Activated CD4-positive, alpha-beta T cell treated with anti-CD3 and anti-CD28 coated beads for 36 hours (primary cell): ENCODE measurements at regions of chr13 and their contacts with region 1.

Region 1: DNA sequence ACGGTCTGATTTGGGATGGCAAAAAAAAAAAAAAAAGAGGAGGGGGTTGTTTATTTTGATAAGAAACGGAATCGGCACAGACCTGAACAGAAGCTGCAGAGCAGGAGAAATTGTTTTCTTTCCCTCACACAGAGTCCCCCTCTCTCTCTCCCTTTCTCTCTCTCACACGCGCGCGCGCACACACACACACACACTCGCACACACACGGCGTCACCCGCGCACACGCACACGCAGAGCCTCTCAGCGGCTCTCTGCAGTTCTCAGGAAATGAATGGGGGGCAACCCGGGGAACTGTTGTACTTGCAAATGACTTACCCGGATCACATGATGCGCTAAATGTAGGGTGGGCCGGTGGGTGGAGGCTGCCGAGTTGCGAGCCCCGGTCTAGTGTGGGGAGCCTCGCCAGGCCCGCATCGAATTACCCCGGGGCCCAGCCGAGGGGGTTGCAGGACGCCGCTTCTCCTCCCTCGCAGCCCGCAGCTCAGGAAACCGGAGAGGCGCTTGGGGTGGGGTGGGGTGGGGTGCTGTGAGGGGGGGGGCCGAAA is 475 bp downstream of the KLF12 start:
- DNase-seq: peak; percentile 91
- ATAC-seq: peak; percentile 53
- H3K4me3 Mint-ChIP-seq: no peak overlapping the region
- H3K27ac Mint-ChIP-seq: peak overlapping the region; percentile 99
- H3K4me1 Mint-ChIP-seq: peaks cover 35% of the 10 kb centered on the region
- H3K27me3 Mint-ChIP-seq: no peaks in the 10 kb centered on the region

Region 2: GRCh38 chr13:72781451-72782439 is 1352.0 kb before region 1 on chr13 and contains the starts of genes DIS3 and PIBF1:
- CTCF ChIA-PET with region 1: no interaction called
- POLR2A ChIA-PET with region 1: no interaction called
- intact Hi-C with region 1: loop called in 1 of 2 experiments (anchors 2 kb)
- DNase-seq: peak; percentile 98
- ATAC-seq: peak; percentile 98
- H3K4me3 Mint-ChIP-seq: peak within 1 kb of the TSS; percentile 94
- H3K27ac Mint-ChIP-seq: peak within 1 kb of the TSS; percentile 97
- H3K4me1 Mint-ChIP-seq: peaks cover 55% of the 10 kb centered on the region
- H3K27me3 Mint-ChIP-seq: no peaks in the 10 kb centered on the region
- total RNA-seq, gene DIS3: 55.0 to 63.5 TPM
- total RNA-seq, gene PIBF1: 25.7 to 25.9 TPM

Region 3: GRCh38 chr13:73835138-73835721 is 298.5 kb before region 1 on chr13:
- CTCF ChIA-PET with region 1: no interaction called
- POLR2A ChIA-PET with region 1: no interaction called
- intact Hi-C with region 1: loop called (anchors 2 to 5 kb)
- DNase-seq: no peak
- ATAC-seq: peak; percentile 57
- H3K4me3 Mint-ChIP-seq: no peak overlapping the region
- H3K27ac Mint-ChIP-seq: no peak overlapping the region
- H3K4me1 Mint-ChIP-seq: peaks cover 46% of the 10 kb centered on the region
- H3K27me3 Mint-ChIP-seq: no peaks in the 10 kb centered on the region

Region 4: GRCh38 chr13:73984949-73985691 is 148.6 kb before region 1 on chr13:
- CTCF ChIA-PET with region 1: no interaction called
- POLR2A ChIA-PET with region 1: interaction called, 5 read pairs
- intact Hi-C with region 1: loop called (anchors 1 kb)
- DNase-seq: peak; percentile 89
- ATAC-seq: peak; percentile 90
- H3K4me3 Mint-ChIP-seq: peak overlapping the region; percentile 58
- H3K27ac Mint-ChIP-seq: peak overlapping the region; percentile 98
- H3K4me1 Mint-ChIP-seq: peaks cover 36% of the 10 kb centered on the region
- H3K27me3 Mint-ChIP-seq: no peaks in the 10 kb centered on the region

Region 5: GRCh38 chr13:74090869-74091605 is 42.7 kb before region 1 on chr13:
- CTCF ChIA-PET with region 1: interaction called, 4 read pairs
- POLR2A ChIA-PET with region 1: interaction called, 3 read pairs
- intact Hi-C with region 1: loop called in 1 of 2 experiments (anchors 2 kb)
- DNase-seq: no peak
- ATAC-seq: peak; percentile 70
- H3K4me3 Mint-ChIP-seq: peak overlapping the region; percentile 24
- H3K27ac Mint-ChIP-seq: peak overlapping the region; percentile 87
- H3K4me1 Mint-ChIP-seq: peaks cover 65% of the 10 kb centered on the region
- H3K27me3 Mint-ChIP-seq: no peaks in the 10 kb centered on the region

Region 6: DNA sequence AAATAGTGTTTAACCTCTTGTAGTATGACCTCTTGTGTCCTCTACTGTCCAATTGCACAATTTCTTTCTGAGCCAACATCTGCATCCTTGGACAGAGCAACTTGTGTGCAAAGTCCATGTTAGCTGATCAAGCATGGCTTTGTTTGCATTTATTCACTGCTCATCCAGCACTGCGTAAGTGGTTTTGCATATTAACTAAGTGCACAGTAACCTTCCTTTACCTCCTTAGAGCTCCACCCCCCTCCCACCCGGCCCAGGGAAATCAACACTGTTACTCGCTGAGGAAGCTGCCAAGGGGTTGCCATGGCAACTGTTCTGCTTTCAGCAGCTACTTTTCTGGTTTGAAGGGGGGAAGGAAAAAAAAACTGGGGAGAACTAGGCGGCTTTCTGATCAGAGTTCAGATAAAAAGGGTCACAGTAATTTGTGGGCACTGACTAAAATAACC is 154.0 kb after region 1 on chr13:
- CTCF ChIA-PET with region 1: interaction called, 14 read pairs
- POLR2A ChIA-PET with region 1: interaction called, 11 read pairs
- intact Hi-C with region 1: loop called (anchors 1 kb)
- DNase-seq: peak; percentile 88
- ATAC-seq: peak; percentile 60
- H3K4me3 Mint-ChIP-seq: peak overlapping the region; percentile 64
- H3K27ac Mint-ChIP-seq: peak overlapping the region; percentile 68
- H3K4me1 Mint-ChIP-seq: peaks cover 60% of the 10 kb centered on the region
- H3K27me3 Mint-ChIP-seq: no peaks in the 10 kb centered on the region

Region 7: GRCh38 chr13:75365724-75366173 is 1232.0 kb after region 1 on chr13:
- CTCF ChIA-PET with region 1: no interaction called
- POLR2A ChIA-PET with region 1: no interaction called
- intact Hi-C with region 1: loop called in 1 of 2 experiments (anchors 5 kb)
- DNase-seq: peak; percentile 41
- ATAC-seq: peak; percentile 93
- H3K4me3 Mint-ChIP-seq: peak overlapping the region; percentile 24
- H3K27ac Mint-ChIP-seq: peak overlapping the region; percentile 79
- H3K4me1 Mint-ChIP-seq: peaks cover 44% of the 10 kb centered on the region
- H3K27me3 Mint-ChIP-seq: no peaks in the 10 kb centered on the region